H1 (cell line): ENCODE measurements at regions of chr12 and their contacts with region 1.

Region 1: DNA sequence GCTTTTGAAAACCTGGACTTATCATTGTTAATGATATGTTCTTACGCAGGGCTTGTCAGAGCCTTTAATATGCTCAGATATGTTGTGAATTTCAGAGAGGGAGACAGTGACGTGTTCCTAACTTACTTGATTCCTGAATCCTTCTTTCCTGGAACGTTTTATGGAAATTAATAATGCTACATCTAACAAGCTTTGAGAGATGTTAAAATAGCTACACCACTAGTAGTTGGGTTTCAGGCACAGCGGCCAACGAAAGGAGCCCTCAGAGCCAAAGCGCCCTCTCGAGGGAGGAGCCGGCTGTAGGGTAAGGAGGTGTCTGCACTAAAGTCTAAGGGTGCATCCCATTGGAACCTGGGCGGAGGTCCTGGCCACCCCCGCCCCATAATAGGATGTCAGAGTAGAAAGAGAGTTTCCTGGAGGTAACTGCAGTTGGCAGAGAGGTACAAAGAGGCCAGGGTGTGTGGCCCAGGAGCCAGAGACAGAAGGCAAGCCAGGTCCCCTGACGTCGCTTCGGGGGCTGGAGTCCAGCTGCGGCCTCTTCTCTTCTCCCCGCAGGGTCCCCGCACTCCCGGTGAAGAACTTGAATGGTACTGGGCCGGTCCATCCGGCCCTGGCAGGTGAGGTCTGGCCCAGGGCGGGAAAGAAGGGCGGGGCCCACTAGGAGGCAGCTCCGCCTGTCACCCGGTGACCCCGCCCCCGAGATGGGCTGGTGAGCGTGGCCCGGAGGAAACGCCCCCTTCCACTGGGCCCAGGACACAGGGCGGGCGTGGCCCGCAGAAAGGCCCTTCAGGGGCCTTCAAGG is 36.3 kb downstream of the DTX1 start:
- DNase-seq: peak in 1 of 2 experiments; percentile 92
- H3K4me3 ChIP-seq: peak overlapping the region; percentile 39 to 64 (median 44)
- H3K27ac ChIP-seq: no peak overlapping the region
- H3K4me1 ChIP-seq: peaks cover 0 to 8% (median 3%) of the 10 kb centered on the region in 4 experiments; a peak in 5 of 7 replicates
- H3K27me3 ChIP-seq: no peaks in the 10 kb centered on the region
- CTCF ChIP-seq: peak; percentile 34 to 58 (median 57); a peak in 3 of 4 replicates
- EP300 ChIP-seq: no peak
- POLR2A ChIP-seq: 0 out of 3 replicates have a peak, but pooled peaks of 1 of the 2 experiments have one; percentile 28
- RAD21 ChIP-seq: peak; percentile 41 to 56

Region 2: DNA sequence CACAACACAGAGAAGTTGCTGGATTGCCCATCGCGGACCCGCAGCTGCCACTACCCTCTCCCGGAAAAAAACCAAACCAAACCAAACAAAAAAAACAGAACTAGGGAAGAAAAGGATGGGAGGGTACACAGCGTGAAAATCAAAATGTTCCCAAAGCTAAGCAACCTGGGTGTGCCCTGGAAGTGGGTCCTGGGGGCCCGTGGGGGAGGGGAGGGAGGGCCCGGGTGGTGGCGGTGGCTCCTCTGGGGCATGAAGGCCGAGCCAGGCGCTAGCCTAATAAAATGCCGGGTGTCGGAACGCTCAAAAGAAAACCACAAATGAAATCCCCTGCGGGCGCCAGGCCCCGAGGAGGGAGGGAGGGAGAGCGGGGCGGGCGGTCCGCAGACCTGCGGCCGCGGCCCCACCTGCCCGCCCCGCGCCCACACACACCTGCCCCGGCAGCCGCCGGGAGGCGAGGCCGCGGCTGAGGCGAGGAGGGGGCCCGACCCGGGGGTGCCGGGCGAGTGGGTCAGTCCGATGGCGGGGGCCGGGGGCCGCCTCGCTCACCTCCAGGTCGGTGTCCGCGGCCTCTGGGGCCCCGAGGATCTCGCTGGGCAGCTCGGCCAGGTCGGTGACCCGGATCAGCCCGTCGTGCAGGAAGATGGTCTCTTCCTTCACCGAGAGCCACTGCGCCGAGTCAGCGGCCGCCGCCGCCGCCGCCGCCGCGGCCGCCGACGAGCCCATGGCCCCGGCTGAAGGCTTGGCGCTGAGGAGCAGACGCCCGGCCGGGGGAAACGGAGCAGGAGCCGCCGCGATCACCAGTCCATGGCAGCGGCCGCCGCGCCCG is 711.2 kb before region 1 on chr12:
- CTCF ChIA-PET with region 1: no interaction called
- POLR2A ChIA-PET with region 1: no interaction called
- DNase-seq: no peak
- H3K4me3 ChIP-seq: peak overlapping the region; percentile 75 to 86 (median 82)
- H3K27ac ChIP-seq: no peak overlapping the region; the same call in 1 of the 2 replicates
- H3K4me1 ChIP-seq: peaks cover 0 to 8% (median 2%) of the 10 kb centered on the region in 4 experiments; a peak in 5 of 7 replicates
- H3K27me3 ChIP-seq: no peaks in the 10 kb centered on the region
- CTCF ChIP-seq: no peak
- EP300 ChIP-seq: peak in 1 of 2 experiments; percentile 53; a peak in 1 of 3 replicates
- POLR2A ChIP-seq: 0 out of 3 replicates have a peak, but pooled peaks of 1 of the 2 experiments have one; percentile 14
- RAD21 ChIP-seq: no peak

Region 3: GRCh38 chr12:113065126-113066007 is 27.4 kb before region 1 on chr12:
- CTCF ChIA-PET with region 1: interaction called, 36 read pairs
- POLR2A ChIA-PET with region 1: no interaction called
- DNase-seq: peak in 1 of 2 experiments; percentile 91
- H3K4me3 ChIP-seq: peak overlapping the region in 3 of 4 experiments; percentile 8 to 52 (median 19); a peak in 5 of 8 replicates
- H3K27ac ChIP-seq: no peak overlapping the region
- H3K4me1 ChIP-seq: peaks cover 0 to 27% (median 15%) of the 10 kb centered on the region in 4 experiments; a peak in 6 of 7 replicates
- H3K27me3 ChIP-seq: peaks cover 0 to 2% (median 0%) of the 10 kb centered on the region in 4 experiments; a peak in 3 of 7 replicates
- CTCF ChIP-seq: no peak
- EP300 ChIP-seq: no peak
- POLR2A ChIP-seq: no peak
- RAD21 ChIP-seq: no peak

Region 4: DNA sequence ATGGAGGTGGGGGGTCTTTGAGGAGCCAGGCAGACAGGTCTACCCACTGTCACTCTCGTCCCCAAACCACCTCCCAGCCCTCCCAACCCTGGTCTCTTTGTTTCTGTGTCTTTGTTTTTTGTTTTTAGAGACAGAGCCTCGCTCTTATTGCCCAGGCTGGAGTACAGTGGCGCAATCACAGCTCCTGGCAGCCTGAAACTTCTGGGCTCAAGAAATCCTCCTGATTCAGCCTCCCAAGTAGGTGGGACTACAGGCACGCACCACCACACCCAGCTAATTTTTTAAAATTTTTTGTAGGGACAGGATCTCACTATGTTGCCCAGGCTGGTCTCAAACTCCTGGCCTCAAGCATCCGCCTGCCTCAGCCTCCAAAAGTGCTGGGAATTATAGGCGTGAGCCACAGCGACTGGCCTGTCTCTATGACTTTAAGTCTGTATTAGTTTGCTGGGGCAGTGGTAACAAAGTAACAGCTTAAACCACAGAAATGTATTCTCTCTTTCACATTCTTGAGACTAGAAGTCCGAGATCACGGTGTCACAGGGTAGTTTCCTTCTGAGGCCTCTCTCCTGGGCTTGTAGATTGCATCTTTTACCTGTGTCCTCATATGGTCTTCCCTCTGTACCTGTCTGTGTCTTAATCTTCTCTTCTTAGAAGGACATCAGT is 10.2 kb before region 1 on chr12:
- CTCF ChIA-PET with region 1: interaction called, 11 read pairs
- POLR2A ChIA-PET with region 1: interaction called, 3 read pairs
- DNase-seq: no peak
- H3K4me3 ChIP-seq: no peak overlapping the region
- H3K27ac ChIP-seq: no peak overlapping the region
- H3K4me1 ChIP-seq: peaks cover 0 to 8% (median 7%) of the 10 kb centered on the region in 4 experiments; a peak in 5 of 7 replicates
- H3K27me3 ChIP-seq: peaks cover 9 to 13% (median 11%) of the 10 kb centered on the region in 4 experiments
- CTCF ChIP-seq: no peak
- EP300 ChIP-seq: no peak
- POLR2A ChIP-seq: no peak
- RAD21 ChIP-seq: no peak

Region 5: DNA sequence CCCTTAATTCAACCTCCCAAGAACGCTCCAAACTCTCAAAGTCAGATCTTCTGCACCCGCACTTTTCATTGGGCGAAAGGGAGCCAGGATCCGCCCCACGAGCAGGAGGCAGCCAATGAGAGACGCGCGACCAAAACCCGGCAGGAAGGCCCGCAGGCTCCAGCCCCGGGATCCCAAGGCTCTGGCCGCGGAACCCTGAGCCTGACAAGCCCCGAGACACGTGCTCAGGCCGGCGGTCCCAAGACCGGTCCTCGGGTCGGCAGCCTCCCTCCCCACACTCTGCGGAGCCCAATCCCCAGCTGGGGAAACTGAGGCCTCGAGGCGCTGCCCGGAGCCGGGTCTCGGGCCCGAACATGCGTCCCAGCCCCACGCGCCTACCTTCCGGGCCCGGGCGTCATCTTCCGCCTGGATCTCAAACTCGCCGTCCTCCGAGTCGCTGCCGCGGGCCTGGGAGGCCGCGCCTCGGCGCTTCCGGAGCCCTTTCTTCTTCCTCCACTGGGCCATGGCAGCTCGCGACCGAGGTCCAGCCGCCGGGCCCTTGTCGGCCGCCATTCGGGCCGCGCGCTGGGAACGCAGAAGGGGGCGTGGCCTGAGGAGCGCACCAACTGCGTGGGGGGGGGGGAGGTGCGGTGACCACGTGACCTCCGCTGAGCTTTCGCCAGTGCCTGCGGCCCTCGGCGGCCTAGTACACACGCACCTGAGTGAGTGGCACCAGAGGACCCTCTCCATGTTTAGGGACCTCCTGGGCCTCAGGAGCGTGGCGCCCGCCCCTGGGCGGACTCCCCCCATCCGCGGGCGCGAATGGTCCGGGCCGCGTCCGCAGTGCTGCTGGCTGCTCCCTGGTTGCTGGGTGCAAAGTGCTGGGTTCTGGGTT is 92.3 kb after region 1 on chr12 and contains the starts of genes DDX54 and RITA1:
- CTCF ChIA-PET with region 1: no interaction called
- POLR2A ChIA-PET with region 1: no interaction called
- DNase-seq: peak; percentile 81 to 90
- H3K4me3 ChIP-seq: peak within 1 kb of the TSS; percentile 75 to 90 (median 80)
- H3K27ac ChIP-seq: peak within 1 kb of the TSS; percentile 84
- H3K4me1 ChIP-seq: peaks cover 0 to 6% (median 3%) of the 10 kb centered on the region in 4 experiments; a peak in 4 of 7 replicates
- H3K27me3 ChIP-seq: no peaks in the 10 kb centered on the region
- CTCF ChIP-seq: no peak
- EP300 ChIP-seq: peak in 1 of 2 experiments; percentile 95; a peak in 2 of 3 replicates
- POLR2A ChIP-seq: peak; percentile 78 to 91
- RAD21 ChIP-seq: no peak
- total RNA-seq, gene DDX54: 112 and 113 TPM in 2 replicates
- total RNA-seq, gene RITA1: 25.8 and 26.4 TPM in 2 replicates